ENCODE measurements at regions of chr7 and their contacts with region 1.

Region 1: GRCh38 chr7:111763221-111763801 is 201.0 kb upstream of the IMMP2L start:
- DNase-seq: peak; percentile 29
- H3K4me3 ChIP-seq: no peak overlapping the region
- H3K27ac ChIP-seq: no peak overlapping the region
- H3K4me1 ChIP-seq: no peaks in the 10 kb centered on the region
- H3K27me3 ChIP-seq: no peaks in the 10 kb centered on the region
- CTCF ChIP-seq: peak; percentile 45 to 65

Region 2: GRCh38 chr7:111374027-111374426 is 389.3 kb before region 1 on chr7:
- CTCF ChIA-PET with region 1: no interaction called
- dilution Hi-C with region 1: no loop called
- in situ Hi-C with region 1: no loop called
- intact Hi-C with region 1: no loop called
- DNase-seq: no peak
- H3K4me3 ChIP-seq: no peak overlapping the region
- H3K27ac ChIP-seq: no peak overlapping the region
- H3K4me1 ChIP-seq: peaks cover 4% of the 10 kb centered on the region
- H3K27me3 ChIP-seq: no peaks in the 10 kb centered on the region
- CTCF ChIP-seq: no peak

Region 3: DNA sequence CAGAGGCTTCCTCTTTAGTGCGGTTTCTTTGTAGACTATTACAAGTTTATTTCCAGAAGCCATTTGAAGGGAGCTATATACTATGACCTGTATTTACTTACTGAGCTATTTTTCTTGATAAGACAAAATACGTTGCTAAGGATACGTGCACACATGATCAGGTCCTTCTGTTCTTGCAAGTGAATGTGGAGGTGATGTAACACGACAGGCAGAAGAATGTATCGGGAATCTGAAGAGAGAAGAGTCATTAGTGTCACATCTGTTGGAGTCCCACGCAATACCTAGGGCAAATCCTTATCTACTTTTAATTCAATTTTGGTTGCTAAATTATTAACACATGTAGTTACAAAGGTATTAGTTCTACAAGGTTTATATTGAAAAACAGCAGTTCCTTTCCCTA is 83.6 kb after region 1 on chr7:
- CTCF ChIA-PET with region 1: no interaction called
- dilution Hi-C with region 1: no loop called
- in situ Hi-C with region 1: loop called (anchors 5 to 10 kb)
- intact Hi-C with region 1: no loop called
- DNase-seq: no peak
- H3K4me3 ChIP-seq: no peak overlapping the region
- H3K27ac ChIP-seq: no peak overlapping the region
- H3K4me1 ChIP-seq: no peaks in the 10 kb centered on the region
- H3K27me3 ChIP-seq: no peaks in the 10 kb centered on the region
- CTCF ChIP-seq: no peak

Region 4: GRCh38 chr7:111855161-111855856 is 92.0 kb after region 1 on chr7:
- CTCF ChIA-PET with region 1: interaction called, 13 read pairs
- dilution Hi-C with region 1: no loop called
- in situ Hi-C with region 1: loop called in 1 of 2 experiments (anchors 10 kb)
- intact Hi-C with region 1: loop called (anchors 1 kb)
- DNase-seq: peak; percentile 48
- H3K4me3 ChIP-seq: no peak overlapping the region
- H3K27ac ChIP-seq: no peak overlapping the region
- H3K4me1 ChIP-seq: no peaks in the 10 kb centered on the region
- H3K27me3 ChIP-seq: no peaks in the 10 kb centered on the region
- CTCF ChIP-seq: peak; percentile 68 to 86

Region 5: DNA sequence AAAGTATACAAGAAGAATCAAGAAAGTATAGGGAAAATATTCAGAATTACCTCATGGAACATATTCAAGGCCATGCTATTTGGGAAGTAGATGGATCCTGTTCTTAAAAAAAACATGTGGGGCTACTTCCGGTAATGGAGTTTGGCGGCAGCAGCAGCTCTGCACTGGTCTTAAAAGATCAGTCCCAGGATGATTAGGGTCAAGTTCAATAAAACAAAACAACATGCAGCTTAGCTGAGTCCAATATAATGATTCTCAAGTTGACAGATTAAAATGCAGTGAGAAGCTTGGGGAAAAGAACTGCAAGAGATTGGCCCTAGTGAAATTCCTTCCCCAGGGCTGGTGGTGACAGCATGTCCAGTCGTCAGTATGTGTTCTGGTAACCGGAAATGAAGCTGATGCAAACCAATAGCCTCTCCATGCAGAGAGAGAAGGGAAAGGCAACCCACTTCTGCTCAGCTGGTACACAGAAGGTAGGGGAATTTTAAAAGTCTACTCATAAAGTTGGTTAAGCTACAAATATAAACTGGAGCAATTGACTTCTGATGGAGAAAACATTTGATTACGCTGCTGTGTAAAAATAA is 104.1 kb after region 1 on chr7:
- CTCF ChIA-PET with region 1: no interaction called
- dilution Hi-C with region 1: loop called (anchors 5 kb)
- in situ Hi-C with region 1: no loop called
- intact Hi-C with region 1: no loop called
- DNase-seq: no peak
- H3K4me3 ChIP-seq: no peak overlapping the region
- H3K27ac ChIP-seq: no peak overlapping the region
- H3K4me1 ChIP-seq: no peaks in the 10 kb centered on the region
- H3K27me3 ChIP-seq: no peaks in the 10 kb centered on the region
- CTCF ChIP-seq: no peak

Region 6: GRCh38 chr7:111953611-111954010 is 190.3 kb after region 1 on chr7:
- CTCF ChIA-PET with region 1: no interaction called
- dilution Hi-C with region 1: no loop called
- in situ Hi-C with region 1: no loop called
- intact Hi-C with region 1: loop called (anchors 1 kb)
- DNase-seq: peak; percentile 92
- H3K4me3 ChIP-seq: no peak overlapping the region
- H3K27ac ChIP-seq: peak overlapping the region; percentile 73
- H3K4me1 ChIP-seq: peaks cover 13% of the 10 kb centered on the region
- H3K27me3 ChIP-seq: no peaks in the 10 kb centered on the region
- CTCF ChIP-seq: peak; percentile 20 to 58

Region 7: DNA sequence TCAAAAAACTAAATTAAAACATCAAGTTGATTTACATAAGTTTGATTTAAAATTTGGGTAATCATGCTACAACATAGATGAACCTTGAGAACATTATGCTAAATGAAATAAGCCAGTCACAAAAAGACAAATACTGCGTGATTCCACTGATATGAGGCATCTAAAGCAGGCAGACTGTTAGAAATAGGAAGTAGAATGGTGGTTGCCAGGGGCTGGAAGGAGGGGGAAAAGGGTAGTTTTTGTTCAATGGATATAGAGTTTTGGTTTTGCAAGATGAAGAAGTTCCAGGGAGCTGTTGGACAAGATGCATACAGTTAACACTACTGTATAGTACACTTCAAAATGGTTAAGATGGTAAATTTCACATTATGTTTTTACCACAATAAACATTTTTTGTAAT is 642.0 kb after region 1 on chr7:
- CTCF ChIA-PET with region 1: no interaction called
- dilution Hi-C with region 1: loop called (anchors 5 kb)
- in situ Hi-C with region 1: loop called in 1 of 2 experiments (anchors 10 kb)
- intact Hi-C with region 1: no loop called
- DNase-seq: no peak
- H3K4me3 ChIP-seq: no peak overlapping the region
- H3K27ac ChIP-seq: no peak overlapping the region
- H3K4me1 ChIP-seq: no peaks in the 10 kb centered on the region
- H3K27me3 ChIP-seq: no peaks in the 10 kb centered on the region
- CTCF ChIP-seq: no peak